Calu3 (cell line): ENCODE measurements at regions of chr1 and their contacts with region 1.

Region 1: DNA sequence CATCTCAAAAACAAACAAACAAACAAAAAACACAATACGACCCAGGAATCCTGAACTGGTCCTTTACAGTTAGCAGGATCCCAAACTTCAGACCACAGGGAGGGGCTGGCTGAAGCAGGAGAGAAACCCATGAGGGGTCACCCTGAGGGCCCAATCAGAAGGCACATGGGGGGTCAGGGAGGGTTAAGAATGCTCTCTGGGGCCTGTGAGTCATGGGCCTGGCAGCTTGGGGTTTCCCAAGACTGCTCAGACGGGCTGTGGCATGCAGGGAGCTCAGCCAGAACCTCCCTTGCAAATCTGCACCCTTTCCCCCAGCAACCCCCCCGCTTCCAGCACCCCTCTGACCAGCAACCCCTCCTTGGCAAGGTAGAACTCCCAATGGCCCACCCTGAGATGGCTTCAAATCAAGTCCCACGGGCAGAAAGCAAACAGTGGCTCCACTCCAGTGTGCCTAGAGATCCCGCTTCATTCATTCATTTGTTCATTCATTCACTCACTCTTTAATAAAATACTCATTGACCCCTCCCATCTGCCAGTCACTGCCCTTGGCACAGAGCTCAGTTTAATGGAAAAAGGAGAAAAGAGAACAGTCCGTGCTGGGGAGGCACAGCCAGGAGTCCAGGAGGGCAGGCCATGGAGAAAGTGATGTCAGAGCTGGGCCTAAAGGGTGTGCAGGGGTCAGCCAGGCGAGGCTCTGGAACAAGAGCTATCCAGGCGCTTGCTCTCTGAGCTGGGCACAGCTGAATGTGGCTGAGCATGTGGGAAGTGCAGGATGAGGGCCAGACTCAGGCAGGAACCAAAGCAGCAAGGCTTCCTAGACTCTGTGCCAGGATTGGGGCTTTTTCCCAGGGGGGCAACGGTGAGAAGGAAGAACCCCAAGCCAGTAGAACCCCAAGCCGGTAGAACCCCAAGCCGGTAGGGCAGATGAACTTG is 8.2 kb downstream of the UQCRHL start:
- DNase-seq: peak; percentile 84
- H3K4me3 Mint-ChIP-seq: peak overlapping the region; percentile 70
- H3K27ac Mint-ChIP-seq: peak overlapping the region; percentile 99
- H3K4me1 Mint-ChIP-seq: peaks cover 58% of the 10 kb centered on the region
- H3K27me3 Mint-ChIP-seq: no peaks in the 10 kb centered on the region
- CTCF ChIP-seq: no peak

Region 2: DNA sequence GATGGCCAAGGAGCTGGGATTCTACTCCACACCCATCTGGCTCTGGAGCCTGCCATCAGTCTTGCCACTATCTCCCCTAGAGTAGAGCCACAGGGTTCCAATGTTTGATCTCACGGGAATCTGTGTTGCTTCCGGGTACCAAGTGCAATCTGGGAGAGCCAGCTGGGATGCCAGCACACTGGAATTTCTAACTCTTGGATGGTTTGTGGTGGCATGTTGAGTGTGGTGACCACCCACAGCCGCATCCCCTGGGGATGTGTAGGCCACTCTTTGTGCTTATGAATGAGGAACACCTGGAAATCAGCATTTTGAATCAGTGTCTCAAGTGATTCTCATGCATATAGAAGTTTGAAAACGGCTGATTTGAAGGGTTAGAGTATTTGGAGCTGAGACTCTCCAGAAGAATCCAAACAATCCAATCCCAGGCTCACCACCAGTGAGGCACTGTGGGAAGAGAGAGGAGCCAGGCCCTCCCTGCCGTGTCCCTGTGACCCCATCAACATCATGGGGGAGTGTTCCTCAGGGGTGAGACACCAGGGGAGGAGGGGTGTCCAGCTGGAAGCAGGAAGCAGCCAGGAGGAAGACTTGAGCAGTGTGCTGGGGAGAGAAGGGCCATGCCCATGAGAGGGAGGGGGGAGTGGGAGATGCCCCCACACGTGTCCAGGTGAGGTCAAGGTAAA is 27.3 kb before region 1 on chr1:
- CTCF ChIA-PET with region 1: no interaction called
- intact Hi-C with region 1: no loop called
- DNase-seq: no peak
- H3K4me3 Mint-ChIP-seq: no peak overlapping the region
- H3K27ac Mint-ChIP-seq: no peak overlapping the region
- H3K4me1 Mint-ChIP-seq: no peaks in the 10 kb centered on the region
- H3K27me3 Mint-ChIP-seq: no peaks in the 10 kb centered on the region
- CTCF ChIP-seq: no peak

Region 3: GRCh38 chr1:15847100-15847892 is 48.0 kb after region 1 on chr1 and contains the start of gene SPEN:
- CTCF ChIA-PET with region 1: interaction called, 10 read pairs
- intact Hi-C with region 1: loop called (anchors 5 kb)
- DNase-seq: peak; percentile 95
- H3K4me3 Mint-ChIP-seq: peak within 1 kb of the TSS; percentile 90
- H3K27ac Mint-ChIP-seq: peak within 1 kb of the TSS; percentile 87
- H3K4me1 Mint-ChIP-seq: no peaks in the 10 kb centered on the region
- H3K27me3 Mint-ChIP-seq: no peaks in the 10 kb centered on the region
- CTCF ChIP-seq: no peak
- total RNA-seq, gene SPEN: 48.3 and 53.6 TPM in 2 replicates

Region 4: DNA sequence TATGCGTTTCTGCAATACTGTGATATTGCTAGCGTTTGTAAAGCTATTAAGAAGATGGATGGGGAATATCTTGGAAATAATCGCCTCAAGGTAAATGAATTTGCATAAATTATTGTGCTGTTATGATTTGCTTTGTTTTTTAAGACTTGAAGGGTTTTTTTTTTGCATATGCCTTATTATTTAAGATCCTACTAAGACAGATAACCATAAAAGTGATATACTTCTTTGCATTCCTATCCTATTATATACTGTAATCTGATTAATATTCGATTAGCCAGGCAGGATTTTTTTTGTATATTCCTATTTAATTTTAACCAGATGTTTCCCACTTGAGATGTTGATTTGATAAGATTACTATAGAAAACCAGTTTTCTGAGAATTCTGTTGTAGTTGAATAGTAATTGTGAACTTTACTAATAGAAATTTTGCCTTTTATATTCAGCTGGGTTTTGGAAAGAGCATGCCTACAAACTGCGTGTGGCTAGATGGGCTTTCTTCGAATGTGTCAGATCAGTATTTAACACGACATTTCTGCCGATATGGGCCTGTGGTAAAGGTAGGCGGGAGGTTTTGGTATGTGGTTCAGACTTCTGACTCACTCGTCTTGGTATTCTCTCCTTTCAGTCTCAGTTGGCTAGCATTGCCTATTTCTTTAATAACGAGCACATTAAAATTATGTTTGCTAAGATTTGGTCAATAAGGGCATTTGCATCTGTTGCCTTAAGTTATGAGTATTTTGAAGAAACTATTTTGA is 119.9 kb after region 1 on chr1:
- CTCF ChIA-PET with region 1: interaction called, 3 read pairs
- intact Hi-C with region 1: loop called (anchors 10 kb)
- DNase-seq: peak; percentile 21
- H3K4me3 Mint-ChIP-seq: no peak overlapping the region
- H3K27ac Mint-ChIP-seq: no peak overlapping the region
- H3K4me1 Mint-ChIP-seq: no peaks in the 10 kb centered on the region
- H3K27me3 Mint-ChIP-seq: no peaks in the 10 kb centered on the region
- CTCF ChIP-seq: no peak